ENCODE measurements at regions of chr2 and their contacts with region 1.

Region 1: DNA sequence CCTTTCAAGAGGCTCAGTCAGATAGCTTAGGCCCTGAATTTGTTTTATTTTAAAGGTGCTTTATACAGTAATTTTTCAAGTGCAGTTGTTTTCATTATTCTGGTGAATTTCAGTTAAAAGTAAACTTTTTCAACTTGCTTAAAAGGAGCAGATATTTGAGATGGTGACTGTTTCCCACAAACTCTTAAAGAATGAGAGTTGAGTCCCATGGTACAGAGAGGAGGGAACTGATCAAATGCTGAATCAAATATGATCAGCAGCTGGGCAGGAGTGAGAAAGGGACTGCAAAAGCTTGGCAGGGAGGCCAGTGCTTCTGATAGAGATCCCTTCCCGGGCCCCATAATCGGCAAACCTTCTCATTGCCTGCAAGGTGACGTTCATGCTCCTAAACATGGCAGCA is 91.2 kb downstream of the KCNS3 start:
- DNase-seq: no peak
- ATAC-seq: no peak
- H3K4me3 ChIP-seq: no peak overlapping the region
- H3K4me3 Mint-ChIP-seq: no peak overlapping the region
- H3K27ac ChIP-seq: no peak overlapping the region
- H3K27ac Mint-ChIP-seq: no peak overlapping the region
- H3K4me1 ChIP-seq: no peaks in the 10 kb centered on the region
- H3K4me1 Mint-ChIP-seq: no peaks in the 10 kb centered on the region
- H3K27me3 ChIP-seq: no peaks in the 10 kb centered on the region
- H3K27me3 Mint-ChIP-seq: no peaks in the 10 kb centered on the region
- CTCF ChIP-seq: no peak

Region 2: GRCh38 chr2:17918789-17919188 is 50.9 kb before region 1 on chr2:
- CTCF ChIA-PET with region 1: no interaction called
- POLR2A ChIA-PET with region 1: no interaction called
- intact Hi-C with region 1: loop called in 1 of 2 experiments (anchors 5 kb)
- DNase-seq: no peak
- ATAC-seq: no peak
- H3K4me3 ChIP-seq: no peak overlapping the region
- H3K4me3 Mint-ChIP-seq: no peak overlapping the region
- H3K27ac ChIP-seq: no peak overlapping the region
- H3K27ac Mint-ChIP-seq: no peak overlapping the region
- H3K4me1 ChIP-seq: no peaks in the 10 kb centered on the region
- H3K4me1 Mint-ChIP-seq: no peaks in the 10 kb centered on the region
- H3K27me3 ChIP-seq: no peaks in the 10 kb centered on the region
- H3K27me3 Mint-ChIP-seq: peaks cover 1% of the 10 kb centered on the region
- CTCF ChIP-seq: no peak

Measured in CD4-positive, alpha-beta T cell (primary cell).